ENCODE measurements at regions of chr18 and their contacts with region 1.

Region 1: GRCh38 chr18:28115149-28115550 is 61.8 kb downstream of the CDH2 start:
- DNase-seq: peak; percentile 66
- H3K4me3 ChIP-seq: no peak overlapping the region
- H3K27ac ChIP-seq: peak overlapping the region; percentile 79
- H3K4me1 ChIP-seq: peaks cover 49% of the 10 kb centered on the region
- H3K27me3 ChIP-seq: no peaks in the 10 kb centered on the region
- CTCF ChIP-seq: no peak
- POLR2A ChIP-seq: no peak

Region 2: DNA sequence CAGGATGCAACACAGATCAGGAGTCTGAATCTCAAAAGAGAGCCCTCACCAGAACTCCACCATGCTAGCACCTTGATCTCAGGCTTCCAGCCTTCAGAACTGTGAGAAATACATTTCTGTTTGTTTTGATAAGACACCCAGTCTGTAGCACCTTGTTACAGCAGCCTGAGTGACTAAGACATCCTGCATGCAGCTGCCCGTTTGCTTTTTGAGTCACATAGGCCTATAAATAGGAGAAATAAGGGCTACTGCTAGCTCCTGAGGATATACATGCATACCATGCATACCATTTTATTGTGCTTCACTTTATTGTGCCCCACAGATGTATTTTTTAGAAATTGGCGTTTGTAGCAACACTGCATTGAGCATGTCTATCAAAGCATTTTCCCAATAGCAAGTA is 276.0 kb before region 1 on chr18:
- CTCF ChIA-PET with region 1: no interaction called
- POLR2A ChIA-PET with region 1: no interaction called
- dilution Hi-C with region 1: no loop called
- intact Hi-C with region 1: loop called (anchors 10 kb)
- DNase-seq: peak; percentile 89
- H3K4me3 ChIP-seq: no peak overlapping the region
- H3K27ac ChIP-seq: peak overlapping the region; percentile 88
- H3K4me1 ChIP-seq: peaks cover 34% of the 10 kb centered on the region
- H3K27me3 ChIP-seq: no peaks in the 10 kb centered on the region
- CTCF ChIP-seq: no peak
- POLR2A ChIP-seq: no peak

Region 3: GRCh38 chr18:27991391-27991790 is 123.8 kb before region 1 on chr18:
- CTCF ChIA-PET with region 1: no interaction called
- POLR2A ChIA-PET with region 1: no interaction called
- dilution Hi-C with region 1: no loop called
- intact Hi-C with region 1: no loop called
- DNase-seq: no peak
- H3K4me3 ChIP-seq: no peak overlapping the region
- H3K27ac ChIP-seq: no peak overlapping the region
- H3K4me1 ChIP-seq: peaks cover 3% of the 10 kb centered on the region
- H3K27me3 ChIP-seq: no peaks in the 10 kb centered on the region
- CTCF ChIP-seq: no peak
- POLR2A ChIP-seq: no peak

Region 4: DNA sequence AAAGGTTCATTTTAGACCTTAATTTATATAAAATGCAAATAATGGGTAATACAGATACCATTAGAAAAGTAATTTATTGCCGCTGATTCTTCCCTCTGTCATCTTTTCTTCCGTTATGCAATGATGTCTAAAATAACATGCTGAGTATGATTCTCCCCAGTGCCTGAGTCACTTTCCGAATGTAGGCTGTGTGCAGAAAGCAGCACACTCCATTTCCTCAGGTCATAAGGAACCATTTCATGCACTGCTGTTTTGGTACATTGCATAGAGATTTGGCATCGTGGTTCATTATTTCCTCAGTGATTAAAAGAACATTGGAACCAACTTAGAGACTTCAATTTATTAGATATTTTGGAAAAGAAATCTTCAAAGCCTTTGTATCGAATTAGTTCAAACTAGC is 111.7 kb before region 1 on chr18:
- CTCF ChIA-PET with region 1: no interaction called
- POLR2A ChIA-PET with region 1: no interaction called
- dilution Hi-C with region 1: no loop called
- intact Hi-C with region 1: loop called (anchors 5 kb)
- DNase-seq: peak; percentile 83
- H3K4me3 ChIP-seq: no peak overlapping the region
- H3K27ac ChIP-seq: peak overlapping the region; percentile 70
- H3K4me1 ChIP-seq: peaks cover 31% of the 10 kb centered on the region
- H3K27me3 ChIP-seq: no peaks in the 10 kb centered on the region
- CTCF ChIP-seq: no peak
- POLR2A ChIP-seq: no peak

Region 5: DNA sequence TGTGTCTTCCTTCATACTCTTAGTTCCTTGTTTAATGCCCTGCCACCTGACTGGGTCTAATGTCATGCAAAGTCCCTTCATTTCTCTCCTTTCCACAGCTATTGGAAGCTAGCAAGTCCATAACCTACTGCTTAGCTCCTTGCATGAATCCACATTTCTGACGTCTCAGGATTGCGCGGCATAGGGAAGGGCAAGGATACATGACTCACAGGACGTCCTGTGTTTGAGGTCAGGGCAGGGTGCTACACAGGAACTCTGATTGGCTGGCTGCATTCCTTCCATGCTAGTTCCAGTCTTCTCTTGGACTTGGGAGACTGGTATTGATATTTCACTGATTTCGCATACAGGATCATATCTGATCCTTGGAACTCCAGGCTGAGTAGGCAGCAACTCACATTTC is 76.1 kb before region 1 on chr18:
- CTCF ChIA-PET with region 1: no interaction called
- POLR2A ChIA-PET with region 1: no interaction called
- dilution Hi-C with region 1: no loop called
- intact Hi-C with region 1: loop called (anchors 2 kb)
- DNase-seq: peak; percentile 64
- H3K4me3 ChIP-seq: no peak overlapping the region
- H3K27ac ChIP-seq: peak overlapping the region; percentile 7
- H3K4me1 ChIP-seq: peaks cover 15% of the 10 kb centered on the region
- H3K27me3 ChIP-seq: no peaks in the 10 kb centered on the region
- CTCF ChIP-seq: no peak
- POLR2A ChIP-seq: no peak